Right ventricle myocardium inferior (tissue), 1 donor: ENCODE measurements at regions of chr1 and their contacts with region 1.

Region 1: GRCh38 chr1:221013691-221014660 is 134.7 kb downstream of the HLX start:
- DNase-seq: no peak
- ATAC-seq: peak; percentile 20

Region 2: GRCh38 chr1:221117548-221117951 is 103.6 kb after region 1 on chr1:
- intact Hi-C with region 1: loop called (anchors 10 kb)
- DNase-seq: no peak
- ATAC-seq: peak; percentile 93